Activated naive CD4-positive, alpha-beta T cell treated with anti-CD3 and anti-CD28 coated beads for 36 hours (primary cell): ENCODE measurements at regions of chr12 and their contacts with region 1.

Region 1: DNA sequence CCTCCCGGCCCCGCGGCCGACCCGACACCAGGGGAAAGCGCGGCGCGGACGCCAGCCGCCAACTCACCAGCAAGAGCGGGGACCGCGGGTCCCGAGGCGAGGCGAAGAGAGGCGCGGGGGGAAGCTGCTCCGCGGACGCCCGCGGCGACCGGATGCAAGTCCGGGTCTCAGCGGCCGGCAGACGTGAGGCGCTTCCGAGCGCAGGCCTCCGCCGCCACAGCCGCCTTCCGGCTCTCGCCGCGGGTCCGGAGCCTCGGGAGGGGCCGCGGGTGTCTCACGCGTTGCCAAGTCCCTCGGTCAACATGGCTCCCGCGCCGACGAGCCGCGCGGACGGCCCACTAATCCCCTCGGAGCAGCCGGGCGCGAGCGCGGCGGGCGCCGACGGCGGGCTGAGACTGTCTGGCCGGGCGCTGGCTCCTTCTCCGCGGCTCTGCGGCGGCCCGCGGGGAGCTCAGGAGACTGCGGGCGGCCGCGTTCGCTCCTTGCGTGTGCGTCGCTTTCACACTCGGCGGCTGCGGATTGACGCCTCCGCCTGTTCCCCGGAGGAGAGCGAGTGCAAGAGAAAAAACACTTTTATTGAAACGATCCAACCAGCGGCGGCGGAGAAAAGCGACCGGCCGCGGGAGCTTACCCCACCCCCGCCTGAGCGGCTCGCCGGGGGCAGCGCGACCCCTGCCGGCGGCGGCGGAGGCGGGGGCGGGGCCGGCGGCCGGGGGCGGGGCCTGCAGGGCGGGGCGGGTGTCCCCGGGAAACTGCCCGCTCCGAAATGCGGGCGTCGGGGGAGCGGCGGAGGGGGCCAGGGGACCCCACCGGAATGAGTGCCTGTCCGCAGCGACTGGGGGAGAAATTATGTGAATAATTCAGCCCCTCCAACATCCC is at the start of gene CDK17:
- DNase-seq: peak; percentile 90
- H3K4me3 Mint-ChIP-seq: peak within 1 kb of the TSS; percentile 81
- H3K27ac Mint-ChIP-seq: peak within 1 kb of the TSS; percentile 94
- H3K4me1 Mint-ChIP-seq: peaks cover 35% of the 10 kb centered on the region
- H3K27me3 Mint-ChIP-seq: no peaks in the 10 kb centered on the region
- total RNA-seq, gene CDK17: 41.4 to 45.8 TPM

Region 2: DNA sequence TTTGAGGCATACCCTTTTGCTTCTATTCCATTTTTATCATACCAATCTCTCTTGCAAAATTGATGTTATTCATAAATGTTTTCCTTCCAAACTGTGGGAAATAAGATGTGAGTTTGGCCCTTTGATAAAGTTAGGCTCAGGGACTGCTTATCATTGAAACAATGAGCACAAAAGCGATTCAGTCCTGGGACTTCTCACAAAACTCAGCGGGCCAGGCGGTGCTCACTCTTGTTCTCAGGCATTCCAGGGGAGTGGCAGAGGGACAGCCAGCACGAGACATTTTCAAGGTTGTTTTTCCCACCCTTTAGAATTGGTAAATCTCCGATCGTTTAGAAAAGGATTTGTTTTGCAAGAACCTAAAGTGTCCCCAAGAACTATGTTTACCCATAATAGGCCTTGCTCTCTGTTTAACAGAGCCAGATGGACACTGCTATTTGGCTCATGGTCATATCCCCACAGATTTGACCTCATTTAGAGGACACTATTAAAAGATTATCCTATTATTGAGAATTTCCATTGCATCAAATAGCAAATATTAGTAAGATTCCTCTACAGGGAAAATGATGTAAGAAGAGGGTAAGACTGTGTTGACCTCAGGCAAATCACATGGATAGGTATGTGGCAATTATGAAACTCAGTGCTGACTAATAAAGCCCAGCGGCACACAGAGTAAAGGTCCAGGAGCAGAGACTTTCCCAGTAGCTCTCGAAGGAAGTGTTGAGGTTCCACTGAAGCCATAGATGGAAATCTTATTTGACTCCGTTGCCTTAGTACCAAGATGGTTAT is 746.2 kb before region 1 on chr12:
- CTCF ChIA-PET with region 1: no interaction called
- intact Hi-C with region 1: no loop called
- DNase-seq: no peak
- H3K4me3 Mint-ChIP-seq: no peak overlapping the region
- H3K27ac Mint-ChIP-seq: no peak overlapping the region
- H3K4me1 Mint-ChIP-seq: no peaks in the 10 kb centered on the region
- H3K27me3 Mint-ChIP-seq: peaks cover 3% of the 10 kb centered on the region

Region 3: GRCh38 chr12:95858479-95859343 is 541.4 kb before region 1 on chr12 and contains the start of gene SNRPF:
- CTCF ChIA-PET with region 1: no interaction called
- intact Hi-C with region 1: loop called (anchors 10 kb)
- DNase-seq: peak; percentile 97
- H3K4me3 Mint-ChIP-seq: no peak within 1 kb of the TSS
- H3K27ac Mint-ChIP-seq: no peak within 1 kb of the TSS
- H3K4me1 Mint-ChIP-seq: peaks cover 25% of the 10 kb centered on the region
- H3K27me3 Mint-ChIP-seq: peaks cover 3% of the 10 kb centered on the region
- total RNA-seq, gene SNRPF: 57.4 to 59.9 TPM

Region 4: GRCh38 chr12:96061864-96062453 is 338.2 kb before region 1 on chr12:
- CTCF ChIA-PET with region 1: interaction called, 14 read pairs
- intact Hi-C with region 1: loop called (anchors 1 kb)
- DNase-seq: peak; percentile 90
- H3K4me3 Mint-ChIP-seq: no peak overlapping the region
- H3K27ac Mint-ChIP-seq: no peak overlapping the region
- H3K4me1 Mint-ChIP-seq: peaks cover 25% of the 10 kb centered on the region
- H3K27me3 Mint-ChIP-seq: no peaks in the 10 kb centered on the region

Region 5: DNA sequence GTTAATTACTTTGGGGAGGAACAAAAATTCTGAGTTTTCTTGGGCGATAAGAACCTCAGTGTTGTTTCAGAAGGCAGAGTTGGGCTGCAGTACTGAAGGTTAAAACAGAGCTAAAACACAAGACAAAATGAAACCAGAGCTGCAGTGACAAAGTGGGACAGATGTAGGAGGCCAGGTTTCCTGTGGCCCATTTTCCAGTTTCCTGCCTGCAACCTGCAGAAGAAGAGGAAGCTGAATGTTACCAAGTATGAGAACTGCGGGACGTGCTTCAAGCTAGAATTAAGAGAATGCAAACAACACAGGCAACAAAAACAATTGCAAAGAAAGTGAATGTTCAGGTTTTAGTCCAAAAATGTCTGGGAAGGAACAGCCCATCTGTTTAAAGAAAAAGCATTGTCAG is 188.2 kb before region 1 on chr12:
- CTCF ChIA-PET with region 1: interaction called, 20 read pairs
- intact Hi-C with region 1: loop called (anchors 1 kb)
- DNase-seq: peak; percentile 33
- H3K4me3 Mint-ChIP-seq: peak overlapping the region; percentile 61
- H3K27ac Mint-ChIP-seq: peak overlapping the region; percentile 84
- H3K4me1 Mint-ChIP-seq: peaks cover 85% of the 10 kb centered on the region
- H3K27me3 Mint-ChIP-seq: no peaks in the 10 kb centered on the region

Region 6: DNA sequence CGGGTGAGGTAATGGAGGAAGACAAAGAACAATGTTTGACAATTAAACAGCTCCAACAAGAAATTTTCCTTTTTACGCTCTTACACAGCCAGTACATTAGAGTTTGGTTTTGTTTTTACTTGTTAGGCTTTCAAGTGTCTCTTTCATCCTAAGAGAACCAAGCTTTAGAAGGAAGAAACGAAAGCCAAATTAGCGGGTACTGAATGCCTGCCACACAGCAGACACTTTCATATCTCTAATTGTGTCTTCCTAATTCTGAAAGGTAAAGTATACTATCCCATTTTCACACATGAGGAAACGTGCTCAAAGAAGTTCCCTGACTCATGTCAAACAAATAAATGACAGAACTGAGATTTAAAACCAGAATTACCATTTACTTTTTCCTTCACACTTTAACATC is 64.9 kb before region 1 on chr12:
- CTCF ChIA-PET with region 1: interaction called, 3 read pairs
- intact Hi-C with region 1: loop called (anchors 1 kb)
- DNase-seq: peak; percentile 34
- H3K4me3 Mint-ChIP-seq: no peak overlapping the region
- H3K27ac Mint-ChIP-seq: peak overlapping the region; percentile 65
- H3K4me1 Mint-ChIP-seq: peaks cover 39% of the 10 kb centered on the region
- H3K27me3 Mint-ChIP-seq: no peaks in the 10 kb centered on the region

Region 7: GRCh38 chr12:96434107-96434506 is 33.9 kb after region 1 on chr12:
- CTCF ChIA-PET with region 1: interaction called, 13 read pairs
- intact Hi-C with region 1: loop called (anchors 2 kb)
- DNase-seq: peak; percentile 91
- H3K4me3 Mint-ChIP-seq: no peak overlapping the region
- H3K27ac Mint-ChIP-seq: peak overlapping the region; percentile 48
- H3K4me1 Mint-ChIP-seq: peaks cover 17% of the 10 kb centered on the region
- H3K27me3 Mint-ChIP-seq: no peaks in the 10 kb centered on the region

Region 8: DNA sequence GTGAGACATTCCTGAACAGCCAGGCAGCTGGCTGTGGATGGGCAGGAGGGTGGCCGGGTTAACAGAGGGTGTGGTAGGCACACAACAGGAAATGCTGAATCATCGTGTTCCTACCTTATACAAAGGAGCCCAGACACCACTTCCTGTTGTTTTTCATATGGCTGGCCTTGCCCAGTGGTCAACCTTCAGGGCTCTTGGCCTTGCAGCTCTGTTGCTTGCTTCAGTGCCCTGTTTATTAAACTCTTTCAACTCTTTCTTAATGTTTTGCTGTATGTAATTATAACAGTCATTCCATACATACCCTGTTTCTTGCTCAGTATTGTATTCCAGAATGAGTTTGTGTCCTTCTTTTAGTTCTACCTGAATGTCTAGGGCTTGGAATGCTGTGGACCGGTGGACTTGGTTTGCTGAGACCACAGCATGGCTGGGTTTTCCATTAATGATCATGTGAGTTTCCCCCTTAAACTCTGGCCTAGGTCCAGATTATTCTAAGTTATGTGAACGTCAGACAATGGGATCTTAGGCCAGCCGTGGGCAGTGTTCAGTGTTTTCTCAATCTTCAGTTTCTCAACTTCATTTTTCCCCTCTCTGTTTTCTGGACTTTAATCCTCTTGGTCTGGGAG is 101.1 kb after region 1 on chr12:
- CTCF ChIA-PET with region 1: interaction called, 8 read pairs
- intact Hi-C with region 1: loop called (anchors 1 kb)
- DNase-seq: peak; percentile 44
- H3K4me3 Mint-ChIP-seq: no peak overlapping the region
- H3K27ac Mint-ChIP-seq: peak overlapping the region; percentile 74
- H3K4me1 Mint-ChIP-seq: peaks cover 31% of the 10 kb centered on the region
- H3K27me3 Mint-ChIP-seq: no peaks in the 10 kb centered on the region

Region 9: DNA sequence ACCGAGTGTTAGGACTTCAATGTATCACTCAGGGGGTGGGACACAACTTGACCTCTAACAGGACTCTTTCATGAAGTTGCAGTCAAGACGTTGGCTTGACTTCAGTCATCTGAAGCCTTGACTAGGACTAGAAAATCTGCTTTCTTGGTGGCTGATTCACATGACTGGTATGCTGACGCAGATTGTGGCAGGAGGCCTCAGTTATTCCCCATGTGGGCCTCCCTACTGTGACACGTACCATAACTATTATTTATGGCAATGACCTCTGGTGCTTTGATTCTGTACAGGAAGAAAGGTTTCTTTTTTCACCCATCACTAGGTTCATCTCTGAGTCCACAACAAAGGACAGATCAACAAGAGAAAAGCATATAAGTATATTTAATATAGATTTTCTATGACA is 777.3 kb after region 1 on chr12:
- CTCF ChIA-PET with region 1: no interaction called
- intact Hi-C with region 1: no loop called
- DNase-seq: no peak
- H3K4me3 Mint-ChIP-seq: no peak overlapping the region
- H3K27ac Mint-ChIP-seq: no peak overlapping the region
- H3K4me1 Mint-ChIP-seq: no peaks in the 10 kb centered on the region
- H3K27me3 Mint-ChIP-seq: peaks cover 9% of the 10 kb centered on the region